Panc1 (cell line): ENCODE measurements at regions of chr3 and their contacts with region 1.

Region 1: GRCh38 chr3:138856799-138857198 is 22.1 kb upstream of the PIK3CB start:
- DNase-seq: no peak
- ATAC-seq: no peak
- H3K4me3 ChIP-seq: no peak overlapping the region
- H3K27ac ChIP-seq: no peak overlapping the region
- H3K4me1 ChIP-seq: peaks cover 7% of the 10 kb centered on the region
- H3K27me3 ChIP-seq: no peaks in the 10 kb centered on the region
- CTCF ChIP-seq: no peak

Region 2: DNA sequence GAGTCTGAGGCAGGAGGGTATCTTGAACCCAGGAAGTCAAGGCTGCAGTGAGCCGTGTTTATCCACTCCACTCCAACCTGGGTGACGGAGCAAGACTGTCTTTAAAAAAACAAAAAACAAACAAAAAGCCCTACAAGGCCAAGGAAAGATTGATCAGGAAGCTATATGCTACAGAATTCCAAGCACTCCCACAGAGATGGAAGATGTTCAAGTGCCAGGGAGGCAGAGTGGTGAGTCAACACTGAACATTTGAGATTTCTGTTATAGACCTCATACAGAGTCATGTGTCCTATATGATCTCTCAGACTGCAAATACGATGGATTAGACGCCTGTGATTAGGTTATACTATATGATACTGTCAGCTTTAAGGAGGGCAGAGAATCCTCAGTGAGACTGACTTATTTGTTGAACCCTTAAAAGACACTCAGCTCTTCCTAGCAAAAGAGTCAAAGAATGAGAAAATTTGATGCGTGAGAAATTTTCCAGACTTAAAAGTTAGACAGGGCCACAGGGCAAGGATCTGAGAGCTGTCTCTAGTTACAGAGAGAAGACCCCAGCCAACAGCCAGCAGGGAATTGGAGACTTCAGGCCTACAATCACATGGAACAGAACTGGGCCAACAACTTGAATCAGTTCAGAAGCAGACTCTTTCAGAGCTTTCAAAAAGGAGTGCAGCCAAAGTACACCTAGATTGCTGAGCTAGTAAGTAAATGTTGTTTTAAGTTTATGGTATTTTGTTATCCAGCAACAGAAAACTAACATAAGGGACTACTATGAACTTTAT is 129.7 kb before region 1 on chr3:
- CTCF ChIA-PET with region 1: no interaction called
- POLR2A ChIA-PET with region 1: no interaction called
- in situ Hi-C with region 1: no loop called
- intact Hi-C with region 1: no loop called
- DNase-seq: no peak
- ATAC-seq: peak; percentile 45; the same call in 1 of the 2 replicates
- H3K4me3 ChIP-seq: no peak overlapping the region
- H3K27ac ChIP-seq: no peak overlapping the region
- H3K4me1 ChIP-seq: no peaks in the 10 kb centered on the region
- H3K27me3 ChIP-seq: no peaks in the 10 kb centered on the region
- CTCF ChIP-seq: no peak

Region 3: DNA sequence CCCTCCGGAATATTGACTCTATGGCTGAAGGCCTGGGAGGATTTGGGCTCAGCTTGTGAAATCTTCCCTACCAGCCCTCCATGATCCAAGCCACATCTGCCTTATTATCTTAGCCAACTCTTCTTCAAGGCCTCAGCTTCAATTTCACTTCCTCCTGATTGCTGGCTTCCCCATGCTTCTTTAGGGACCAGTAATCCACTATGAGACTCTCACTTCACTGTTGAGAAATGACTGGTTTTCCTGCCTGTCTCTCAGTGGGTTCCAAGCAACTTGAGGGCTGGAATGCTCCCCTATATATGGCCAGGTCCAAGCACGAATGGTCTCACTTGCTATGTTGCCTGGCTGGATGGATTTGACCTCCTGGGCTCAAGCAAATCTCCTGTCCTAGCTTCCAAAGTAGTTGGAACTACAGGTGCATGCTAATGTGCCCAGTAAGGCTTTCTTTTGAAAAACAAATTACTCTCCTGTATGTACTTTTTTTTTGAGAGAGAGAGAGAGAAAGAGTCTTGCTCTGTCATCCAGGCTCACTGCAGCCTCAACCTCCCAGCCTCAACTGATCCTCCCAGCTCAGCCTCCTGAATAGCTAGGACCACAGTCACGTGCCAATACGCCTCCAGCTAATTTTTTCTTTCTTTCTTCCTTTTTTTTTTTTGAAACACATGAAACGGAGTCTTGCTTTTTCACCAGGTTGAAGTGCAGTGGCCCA is 14.2 kb before region 1 on chr3:
- CTCF ChIA-PET with region 1: no interaction called
- POLR2A ChIA-PET with region 1: interaction called, 12 read pairs
- in situ Hi-C with region 1: no loop called
- intact Hi-C with region 1: no loop called
- DNase-seq: no peak
- ATAC-seq: 0 out of 2 replicates have a peak, but pooled peaks have one; percentile 52
- H3K4me3 ChIP-seq: no peak overlapping the region
- H3K27ac ChIP-seq: no peak overlapping the region
- H3K4me1 ChIP-seq: no peaks in the 10 kb centered on the region
- H3K27me3 ChIP-seq: no peaks in the 10 kb centered on the region
- CTCF ChIP-seq: no peak